ENCODE measurements at regions of chr17 and their contacts with region 1.

Region 1: DNA sequence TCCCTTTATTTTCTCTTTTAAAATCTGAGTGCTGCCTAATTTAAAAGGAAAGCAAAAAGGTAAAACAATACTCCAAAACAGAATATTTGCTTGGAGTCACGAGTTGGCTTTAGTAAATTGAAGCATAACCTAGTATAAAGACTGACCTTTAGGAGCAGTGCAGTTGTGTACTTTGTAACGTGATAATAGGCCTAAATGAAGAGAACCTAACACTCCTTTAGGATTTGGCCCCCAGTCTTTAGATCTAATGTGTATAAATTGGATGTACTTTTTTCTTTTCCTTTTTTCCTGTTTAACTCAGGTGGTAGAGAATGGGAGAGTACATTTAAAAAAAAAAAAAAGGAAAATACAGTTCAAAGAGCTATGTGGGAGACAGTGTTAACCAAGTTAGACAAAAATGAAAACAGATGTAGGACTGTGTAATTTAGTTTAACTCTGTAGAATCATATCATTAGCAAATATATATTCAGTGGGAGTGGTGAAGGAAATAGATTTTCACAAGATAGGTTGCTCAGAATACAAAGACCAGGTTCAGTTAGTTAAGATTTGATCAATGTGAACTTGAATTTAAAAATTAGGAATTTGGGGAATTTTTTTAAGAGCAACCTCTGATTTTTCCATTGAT is 16.8 kb downstream of the CPD start:
- DNase-seq: no peak
- H3K4me3 ChIP-seq: no peak overlapping the region
- H3K27ac ChIP-seq: no peak overlapping the region
- H3K4me1 ChIP-seq: no peaks in the 10 kb centered on the region
- H3K27me3 ChIP-seq: no peaks in the 10 kb centered on the region
- CTCF ChIP-seq: no peak
- EP300 ChIP-seq: no peak
- POLR2A ChIP-seq: no peak

Region 2: GRCh38 chr17:30454635-30455034 is 59.1 kb after region 1 on chr17:
- intact Hi-C with region 1: loop called in 1 of 4 experiments (anchors 2 kb)
- DNase-seq: no peak
- H3K4me3 ChIP-seq: no peak overlapping the region
- H3K27ac ChIP-seq: no peak overlapping the region
- H3K4me1 ChIP-seq: no peaks in the 10 kb centered on the region
- H3K27me3 ChIP-seq: no peaks in the 10 kb centered on the region
- CTCF ChIP-seq: no peak
- EP300 ChIP-seq: no peak
- POLR2A ChIP-seq: no peak

Measured in ovary (tissue), 10 donors.